Dendritic cell treated with granulocyte-macrophage colony-stimulating factor and Interleukin-4, amounts not matched to agents 40 ng/mL and 50 ng/mL, for 4 days (primary cell): ENCODE measurements at regions of chr4 and their contacts with region 1.

Region 1: GRCh38 chr4:80221161-80221560 is 23.9 kb downstream of the PRDM8 start:
- H3K4me3 Mint-ChIP-seq: no peak overlapping the region
- H3K27ac Mint-ChIP-seq: no peak overlapping the region
- H3K4me1 Mint-ChIP-seq: no peaks in the 10 kb centered on the region
- H3K27me3 Mint-ChIP-seq: peaks cover 4% of the 10 kb centered on the region

Region 2: GRCh38 chr4:80156410-80156809 is 64.8 kb before region 1 on chr4:
- intact Hi-C with region 1: no loop called
- H3K4me3 Mint-ChIP-seq: no peak overlapping the region
- H3K27ac Mint-ChIP-seq: no peak overlapping the region
- H3K4me1 Mint-ChIP-seq: peaks cover 11% of the 10 kb centered on the region
- H3K27me3 Mint-ChIP-seq: no peaks in the 10 kb centered on the region

Region 3: GRCh38 chr4:80335554-80336358 is 114.6 kb after region 1 on chr4 and contains the start of gene CFAP299:
- intact Hi-C with region 1: loop called (anchors 10 kb)
- H3K4me3 Mint-ChIP-seq: peak within 1 kb of the TSS; percentile 87
- H3K27ac Mint-ChIP-seq: no peak within 1 kb of the TSS
- H3K4me1 Mint-ChIP-seq: peaks cover 13% of the 10 kb centered on the region
- H3K27me3 Mint-ChIP-seq: peaks cover 15% of the 10 kb centered on the region